ENCODE measurements at regions of chr2 and their contacts with region 1.

Region 1: GRCh38 chr2:25362049-25362433 is 20.3 kb upstream of the DNMT3A start:
- DNase-seq: peak; percentile 97
- H3K4me3 ChIP-seq: peak overlapping the region; percentile 33 to 73 (median 46)
- H3K27ac ChIP-seq: peak overlapping the region; percentile 75 to 93 (median 88)
- H3K4me1 ChIP-seq: peaks cover 0 to 31% (median 15%) of the 10 kb centered on the region in 6 donors
- H3K27me3 ChIP-seq: no peaks in the 10 kb centered on the region
- CTCF ChIP-seq: peak; percentile 95 to 100 (median 99)
- POLR2A ChIP-seq: peak; percentile 31 to 82 (median 78)

Region 2: DNA sequence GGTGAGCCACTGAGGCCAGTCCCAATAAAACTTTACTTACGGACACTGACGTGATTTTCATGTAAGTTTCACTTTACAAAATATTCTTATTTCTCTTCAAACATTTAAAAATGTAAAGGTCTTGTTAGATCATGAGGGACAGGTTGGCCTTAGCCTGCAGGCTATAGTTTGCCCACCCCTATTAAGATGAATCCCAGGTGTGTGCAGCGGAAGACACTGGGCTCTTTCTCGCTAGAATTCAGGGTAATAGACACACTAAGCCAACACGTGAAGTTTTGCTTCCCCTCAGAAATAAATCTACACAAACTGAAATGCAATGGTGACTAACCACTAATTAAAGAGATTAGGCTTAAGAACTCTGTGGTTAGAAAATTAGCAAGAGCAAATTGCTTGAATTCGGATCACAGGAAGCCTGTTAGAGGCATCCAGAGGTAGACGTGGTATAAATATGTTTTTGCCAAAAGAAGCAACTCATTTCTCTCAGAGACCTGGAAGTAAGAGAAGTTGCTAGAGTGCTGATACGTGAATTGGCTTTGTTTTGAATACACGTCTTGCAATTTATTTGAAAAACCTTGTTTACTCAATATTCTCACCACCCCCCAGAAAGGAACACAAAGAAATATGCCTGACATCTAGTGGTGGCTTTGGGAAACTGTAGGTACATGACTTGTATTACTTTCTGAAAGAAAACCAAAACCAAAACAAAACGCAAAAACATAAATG is 159.8 kb after region 1 on chr2:
- intact Hi-C with region 1: loop called (anchors 10 kb)
- DNase-seq: no peak
- H3K4me3 ChIP-seq: peak overlapping the region in 4 of 8 donors; percentile 4 to 45 (median 6)
- H3K27ac ChIP-seq: peak overlapping the region in 5 of 8 donors; percentile 61 to 68 (median 65)
- H3K4me1 ChIP-seq: peaks cover 0 to 24% (median 9%) of the 10 kb centered on the region in 6 donors
- H3K27me3 ChIP-seq: no peaks in the 10 kb centered on the region
- CTCF ChIP-seq: peak; percentile 64 to 96 (median 85)
- POLR2A ChIP-seq: no peak